ENCODE measurements at regions of chr5 and their contacts with region 1.

Region 1: DNA sequence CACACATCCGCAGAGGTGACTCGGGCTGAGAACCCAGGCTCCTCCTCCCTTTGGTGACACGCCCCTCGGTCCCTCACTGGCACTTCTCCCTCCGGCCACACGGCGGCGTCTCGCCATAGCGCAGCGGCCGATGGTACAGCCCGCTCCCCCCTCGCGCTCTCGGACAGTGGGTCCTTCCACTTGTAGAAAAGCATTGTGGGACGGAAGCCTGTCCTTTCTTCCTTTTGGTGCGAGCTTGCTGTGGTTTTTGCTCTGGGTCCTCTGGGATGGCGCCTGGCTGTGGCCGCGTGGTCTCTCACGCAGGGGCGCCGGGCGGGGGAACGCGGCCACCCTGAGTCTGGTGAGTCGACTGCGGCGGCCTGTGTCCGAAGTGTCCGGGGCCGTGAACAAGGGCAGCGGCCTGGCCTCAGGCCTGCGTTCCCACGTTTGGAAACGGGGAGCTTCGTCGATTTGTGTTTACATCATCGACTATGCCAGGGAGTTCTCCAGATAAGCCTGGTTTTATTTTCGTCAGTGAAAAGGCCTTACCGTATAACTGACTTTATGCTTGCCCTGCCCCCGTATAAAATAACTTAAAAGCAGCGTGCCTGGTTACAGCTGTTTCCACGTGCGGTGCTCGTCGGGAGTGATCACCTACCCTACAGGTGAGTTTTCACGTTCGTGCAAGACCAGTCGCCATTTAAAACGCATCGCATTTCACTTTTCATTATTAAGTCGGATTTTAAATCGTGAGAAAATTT is 258.3 kb downstream of the EPB41L4A start:
- DNase-seq: peak; percentile 85 to 96 (median 91)
- ATAC-seq: peak; percentile 100
- H3K4me3 ChIP-seq: peak overlapping the region; percentile 73
- H3K4me3 Mint-ChIP-seq: peak overlapping the region; percentile 81 to 96 (median 94)
- H3K27ac ChIP-seq: peak overlapping the region; percentile 80
- H3K27ac Mint-ChIP-seq: peak overlapping the region; percentile 60 to 95 (median 89)
- H3K4me1 ChIP-seq: peaks cover 10 to 16% of the 10 kb centered on the region in 2 donors
- H3K4me1 Mint-ChIP-seq: peaks cover 18 to 41% (median 31%) of the 10 kb centered on the region in 7 donors
- H3K27me3 ChIP-seq: no peaks in the 10 kb centered on the region
- H3K27me3 Mint-ChIP-seq: no peaks in the 10 kb centered on the region

Region 2: DNA sequence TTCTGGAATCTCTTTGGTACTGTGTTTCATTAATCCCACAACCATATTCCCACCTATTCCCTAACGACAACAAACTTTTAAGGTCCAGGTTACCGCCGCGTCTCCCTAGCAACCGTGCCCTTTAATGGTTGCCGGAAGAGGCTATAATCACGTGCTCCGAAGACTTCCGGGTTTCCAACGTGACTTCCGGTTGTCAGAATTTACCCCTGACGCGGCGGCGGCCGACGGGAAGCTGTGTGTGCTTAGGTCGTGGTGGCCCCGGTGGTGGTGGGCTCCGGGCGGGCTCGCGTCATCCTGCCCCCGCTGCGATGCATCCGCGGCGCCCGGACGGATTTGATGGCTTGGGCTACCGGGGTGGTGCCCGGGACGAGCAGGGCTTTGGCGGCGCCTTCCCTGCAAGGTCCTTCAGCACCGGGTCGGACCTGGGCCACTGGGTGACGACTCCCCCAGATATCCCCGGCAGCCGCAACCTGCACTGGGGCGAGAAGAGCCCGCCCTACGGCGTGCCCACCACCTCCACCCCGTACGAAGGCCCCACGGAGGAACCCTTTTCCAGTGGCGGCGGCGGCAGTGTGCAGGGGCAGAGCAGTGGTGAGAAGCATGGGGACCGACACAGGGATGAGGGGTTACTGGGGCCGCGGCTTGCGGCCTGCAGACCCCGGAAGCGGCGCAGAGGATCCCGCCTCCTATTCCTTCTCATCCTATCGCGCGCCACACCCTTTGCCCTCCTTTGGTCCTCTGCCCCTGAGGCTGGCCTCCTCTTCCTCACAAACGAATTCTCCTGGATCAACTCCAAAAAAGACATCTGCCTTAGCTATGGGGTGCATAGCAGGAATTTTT is 1421.8 kb before region 1 on chr5 and contains the start of gene SLC25A46:
- CTCF ChIA-PET with region 1: no interaction called
- POLR2A ChIA-PET with region 1: no interaction called
- intact Hi-C with region 1: loop called (anchors 1 kb)
- DNase-seq: peak; percentile 75 to 92 (median 91)
- ATAC-seq: peak; percentile 92
- H3K4me3 ChIP-seq: peak within 1 kb of the TSS; percentile 96
- H3K4me3 Mint-ChIP-seq: peak within 1 kb of the TSS; percentile 90 to 100 (median 96)
- H3K27ac ChIP-seq: peak within 1 kb of the TSS; percentile 86
- H3K27ac Mint-ChIP-seq: peak within 1 kb of the TSS; percentile 91 to 100 (median 96)
- H3K4me1 ChIP-seq: peaks cover 4 to 15% of the 10 kb centered on the region in 2 donors
- H3K4me1 Mint-ChIP-seq: peaks cover 14 to 45% (median 34%) of the 10 kb centered on the region in 7 donors
- H3K27me3 ChIP-seq: no peaks in the 10 kb centered on the region
- H3K27me3 Mint-ChIP-seq: peaks cover 4 to 19% (median 6%) of the 10 kb centered on the region in 5 donors
- total RNA-seq, gene SLC25A46: 23.8 to 50.5 (median 35.9) TPM

Region 3: GRCh38 chr5:111223889-111224563 is 936.8 kb before region 1 on chr5 and contains the start of gene CAMK4:
- CTCF ChIA-PET with region 1: no interaction called
- POLR2A ChIA-PET with region 1: no interaction called
- intact Hi-C with region 1: loop called in 1 of 2 experiments (anchors 1 kb)
- DNase-seq: peak; percentile 74 to 87 (median 84)
- ATAC-seq: peak; percentile 95
- H3K4me3 ChIP-seq: peak within 1 kb of the TSS; percentile 81
- H3K4me3 Mint-ChIP-seq: peak within 1 kb of the TSS; percentile 79 to 99 (median 96)
- H3K27ac ChIP-seq: peak within 1 kb of the TSS; percentile 93
- H3K27ac Mint-ChIP-seq: peak within 1 kb of the TSS; percentile 89 to 99 (median 97)
- H3K4me1 ChIP-seq: peaks cover 17 to 25% of the 10 kb centered on the region in 2 donors
- H3K4me1 Mint-ChIP-seq: peaks cover 15 to 39% (median 26%) of the 10 kb centered on the region in 7 donors
- H3K27me3 ChIP-seq: no peaks in the 10 kb centered on the region
- H3K27me3 Mint-ChIP-seq: peaks cover 0 to 4% (median 0%) of the 10 kb centered on the region in 5 donors
- total RNA-seq, gene CAMK4: 118 to 366 (median 210) TPM

Region 4: DNA sequence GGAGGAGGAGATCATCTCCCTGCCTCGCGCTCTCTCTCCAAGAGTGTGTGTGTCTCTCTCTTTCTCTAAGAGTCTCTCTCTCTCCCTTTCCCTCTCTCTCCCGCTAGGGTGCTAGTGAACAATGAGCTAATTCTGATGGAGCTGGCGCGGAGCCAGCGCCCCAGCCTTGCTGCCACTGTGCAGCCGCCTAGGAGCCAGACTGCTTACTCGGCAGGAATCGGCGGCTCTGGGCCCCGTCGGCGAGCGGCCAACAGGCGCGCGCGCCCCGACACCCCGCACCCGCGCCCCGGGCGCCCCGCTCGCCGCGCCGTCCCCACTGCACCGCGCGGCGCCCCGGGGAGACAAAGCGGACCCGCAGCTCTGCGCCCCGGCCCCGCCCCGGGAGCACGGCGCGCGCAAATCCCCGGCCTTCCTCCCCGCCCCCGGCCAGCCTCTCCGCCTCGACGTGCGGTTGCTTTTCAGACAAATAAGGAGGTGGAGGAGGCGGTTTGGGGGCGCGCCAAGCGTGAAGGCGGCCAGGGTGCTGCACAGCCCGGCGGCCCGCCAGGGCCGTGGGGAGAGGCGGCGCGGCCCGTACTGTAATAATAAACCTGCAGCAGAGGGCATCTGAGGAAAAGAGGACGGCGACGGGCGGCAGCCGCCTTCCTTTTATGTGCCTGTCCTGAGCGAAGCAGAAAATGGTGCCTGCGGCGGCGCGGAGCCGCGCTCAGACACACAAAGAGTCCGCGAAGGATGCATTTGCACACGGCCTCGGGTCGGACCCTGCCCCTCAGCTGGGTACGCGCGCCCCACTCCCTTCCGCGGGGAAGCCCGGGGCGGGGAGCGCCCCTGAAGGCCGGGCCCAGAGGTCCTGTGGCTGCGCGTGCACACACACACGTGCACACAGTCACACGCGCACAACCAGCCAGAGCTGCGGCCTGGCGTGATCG is 403.2 kb before region 1 on chr5:
- CTCF ChIA-PET with region 1: no interaction called
- POLR2A ChIA-PET with region 1: interaction called, 4 read pairs
- intact Hi-C with region 1: loop called (anchors 1 kb)
- DNase-seq: peak; percentile 65 to 89 (median 86)
- ATAC-seq: peak; percentile 87
- H3K4me3 ChIP-seq: peak overlapping the region; percentile 64
- H3K4me3 Mint-ChIP-seq: peak overlapping the region; percentile 83 to 94 (median 90)
- H3K27ac ChIP-seq: peak overlapping the region; percentile 75
- H3K27ac Mint-ChIP-seq: peak overlapping the region; percentile 57 to 92 (median 83)
- H3K4me1 ChIP-seq: peaks cover 0 to 4% of the 10 kb centered on the region in 2 donors
- H3K4me1 Mint-ChIP-seq: peaks cover 4 to 29% (median 18%) of the 10 kb centered on the region in 7 donors
- H3K27me3 ChIP-seq: no peaks in the 10 kb centered on the region
- H3K27me3 Mint-ChIP-seq: peaks cover 0 to 6% (median 0%) of the 10 kb centered on the region in 5 donors

Region 5: DNA sequence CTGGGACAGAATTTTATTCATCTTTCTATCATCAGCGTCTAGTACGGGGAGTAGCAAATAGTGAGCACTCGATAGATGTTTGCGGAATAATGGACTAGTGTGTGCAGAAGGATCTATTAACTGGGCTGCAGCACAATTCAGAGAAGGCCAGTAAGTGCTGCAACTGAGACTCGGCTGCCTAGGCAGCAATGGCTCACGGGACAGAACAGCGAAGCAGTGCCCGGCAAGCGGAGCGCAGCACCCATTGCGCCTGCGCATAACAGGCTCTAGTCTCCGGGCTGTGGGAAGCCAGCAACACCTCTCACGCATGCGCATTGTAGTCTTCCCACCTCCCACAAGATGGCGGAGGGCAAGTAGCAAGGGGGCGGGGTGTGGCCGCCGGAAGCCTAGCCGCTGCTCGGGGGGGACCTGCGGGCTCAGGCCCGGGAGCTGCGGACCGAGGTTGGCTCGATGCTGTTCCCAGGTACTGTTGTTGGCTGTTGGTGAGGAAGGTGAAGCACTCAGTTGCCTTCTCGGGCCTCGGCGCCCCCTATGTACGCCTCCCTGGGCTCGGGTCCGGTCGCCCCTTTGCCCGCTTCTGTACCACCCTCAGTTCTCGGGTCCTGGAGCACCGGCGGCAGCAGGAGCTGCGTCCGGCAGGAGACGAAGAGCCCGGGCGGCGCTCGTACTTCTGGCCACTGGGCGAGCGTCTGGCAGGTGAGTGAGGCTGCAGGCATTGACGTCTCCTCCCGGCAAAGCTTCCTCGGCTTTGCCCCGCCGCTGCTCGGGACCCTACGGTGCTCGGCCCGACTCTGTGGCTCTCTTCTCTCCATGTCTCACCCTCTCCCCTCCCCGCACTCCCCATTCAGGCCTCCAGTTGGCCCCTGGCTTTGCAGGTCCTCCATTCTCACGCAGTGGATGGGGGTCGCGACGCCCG is 546.6 kb after region 1 on chr5:
- CTCF ChIA-PET with region 1: no interaction called
- POLR2A ChIA-PET with region 1: interaction called, 3 read pairs
- intact Hi-C with region 1: loop called (anchors 1 kb)
- DNase-seq: peak; percentile 83 to 98 (median 97)
- ATAC-seq: peak; percentile 96
- H3K4me3 ChIP-seq: peak overlapping the region; percentile 92
- H3K4me3 Mint-ChIP-seq: peak overlapping the region; percentile 79 to 98 (median 94)
- H3K27ac ChIP-seq: peak overlapping the region; percentile 82
- H3K27ac Mint-ChIP-seq: peak overlapping the region; percentile 88 to 96 (median 92)
- H3K4me1 ChIP-seq: peaks cover 29 to 47% of the 10 kb centered on the region in 2 donors
- H3K4me1 Mint-ChIP-seq: peaks cover 50 to 62% (median 57%) of the 10 kb centered on the region in 7 donors
- H3K27me3 ChIP-seq: no peaks in the 10 kb centered on the region
- H3K27me3 Mint-ChIP-seq: peaks cover 0 to 8% (median 0%) of the 10 kb centered on the region in 5 donors

Region 6: DNA sequence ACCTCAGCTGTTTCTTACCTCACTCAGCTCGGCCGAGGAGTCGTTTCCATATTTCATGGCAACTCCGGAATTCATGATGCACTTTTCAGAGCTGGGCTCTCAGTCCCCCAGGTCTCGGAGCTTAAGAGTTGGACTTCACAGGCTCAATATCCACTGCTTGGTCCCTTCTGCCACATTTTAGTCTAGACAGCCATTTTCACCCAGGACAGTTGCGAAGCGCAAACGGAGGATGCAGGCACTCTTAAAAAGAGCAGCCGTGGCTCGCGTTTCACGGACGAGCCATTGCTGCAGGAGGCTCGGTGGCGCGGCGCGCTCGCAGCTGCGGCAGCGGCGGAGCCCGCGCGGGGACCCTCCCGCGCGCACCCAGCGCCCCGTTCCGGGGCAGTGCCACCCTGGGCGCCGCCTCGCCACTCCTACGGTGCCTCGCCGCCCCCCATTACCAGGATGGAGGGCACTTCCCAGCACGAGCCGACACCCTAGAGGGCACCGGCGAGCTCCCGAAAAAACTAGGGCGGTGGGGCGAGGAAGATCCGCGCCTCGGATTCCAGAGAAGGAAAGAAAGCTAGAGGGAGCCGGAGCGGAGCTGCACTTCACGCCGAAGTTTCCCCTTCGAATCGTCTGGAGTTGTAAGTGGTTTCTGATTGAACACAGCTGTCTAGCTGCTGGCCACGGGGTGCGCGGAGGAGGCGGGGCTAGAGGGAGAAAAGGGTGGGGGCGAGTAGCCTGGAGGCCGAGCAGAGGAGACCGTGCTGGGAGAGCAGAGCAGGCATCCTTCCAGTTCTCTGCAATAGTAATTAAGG is 1133.7 kb after region 1 on chr5:
- CTCF ChIA-PET with region 1: no interaction called
- POLR2A ChIA-PET with region 1: no interaction called
- intact Hi-C with region 1: loop called in 1 of 2 experiments (anchors 2 kb)
- DNase-seq: peak; percentile 30 to 72 (median 62)
- ATAC-seq: peak; percentile 92
- H3K4me3 ChIP-seq: peak overlapping the region; percentile 64
- H3K4me3 Mint-ChIP-seq: peak overlapping the region; percentile 88 to 96 (median 92)
- H3K27ac ChIP-seq: peak overlapping the region; percentile 43
- H3K27ac Mint-ChIP-seq: peak overlapping the region in 6 of 9 donors; percentile 21 to 86 (median 46)
- H3K4me1 ChIP-seq: peaks cover 8 to 11% of the 10 kb centered on the region in 2 donors
- H3K4me1 Mint-ChIP-seq: peaks cover 13 to 28% (median 21%) of the 10 kb centered on the region in 7 donors
- H3K27me3 ChIP-seq: no peaks in the 10 kb centered on the region
- H3K27me3 Mint-ChIP-seq: peaks cover 30 to 82% (median 59%) of the 10 kb centered on the region in 5 donors

Measured in naive thymus-derived CD4-positive, alpha-beta T cell (primary cell).